Left ventricle myocardium superior (tissue), 1 donor: ENCODE measurements at regions of chr7 and their contacts with region 1.

Region 1: DNA sequence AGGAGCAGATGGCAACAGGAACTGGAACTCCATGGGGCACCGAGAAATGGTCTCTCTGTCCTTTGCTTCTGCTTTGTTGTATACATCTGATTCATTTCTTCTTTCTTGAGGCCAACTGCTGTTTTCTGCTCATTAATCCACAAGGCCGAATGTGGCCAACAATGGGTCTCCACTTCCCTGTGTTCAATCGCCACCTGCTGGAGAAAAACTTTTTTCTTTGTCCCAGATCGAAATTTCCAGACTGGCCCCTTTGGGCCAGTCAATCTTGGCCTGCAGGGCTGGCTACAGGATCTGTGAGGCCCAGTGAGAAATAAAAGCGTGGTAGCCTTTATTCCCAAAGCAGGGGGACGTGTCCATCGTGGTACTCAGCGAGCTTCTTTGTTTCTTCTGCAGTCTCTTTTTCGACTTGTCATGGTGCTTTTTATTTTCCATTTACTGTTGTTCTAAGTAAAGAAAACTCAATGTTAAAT is 58.8 kb downstream of the PARP12 start:
- DNase-seq: no peak
- ATAC-seq: no peak

Region 2: DNA sequence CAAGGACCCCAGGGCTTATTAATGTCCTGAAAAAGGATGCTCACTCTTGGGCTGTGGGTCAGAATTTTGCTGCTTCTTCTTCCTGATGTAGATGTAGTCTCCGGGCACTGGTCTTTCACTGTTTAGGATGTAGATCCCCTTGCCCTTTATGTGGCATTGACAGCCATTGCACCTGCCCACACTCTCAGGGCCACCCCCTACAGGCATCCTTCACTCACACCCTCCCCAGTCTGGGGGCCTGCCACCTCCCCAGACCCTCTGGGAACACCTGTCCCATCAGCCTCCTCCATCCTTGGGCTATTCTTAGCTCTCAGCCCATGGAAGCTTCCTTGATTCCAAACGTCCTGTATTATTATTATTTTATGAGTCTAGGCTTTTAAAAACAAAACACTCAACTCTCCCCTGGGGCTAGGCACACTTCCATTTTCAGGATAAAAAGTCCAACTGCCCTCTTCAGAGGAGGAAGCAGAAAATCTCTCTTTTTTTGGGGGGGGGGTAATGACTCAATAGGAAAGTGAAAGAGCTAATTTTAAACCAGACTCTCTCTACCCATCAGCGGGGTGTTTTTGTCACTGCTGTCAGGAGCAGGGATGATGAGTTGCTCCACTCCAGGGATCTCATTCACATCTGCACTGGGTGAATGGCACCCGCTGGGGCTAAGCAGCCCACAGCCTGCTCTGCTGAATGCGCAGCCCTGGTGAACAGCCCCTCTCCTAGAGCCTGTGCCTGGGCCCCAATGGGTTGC is 508.9 kb before region 1 on chr7:
- intact Hi-C with region 1: loop called (anchors 10 kb)
- DNase-seq: no peak
- ATAC-seq: peak; percentile 20

Region 3: GRCh38 chr7:139618482-139619366 is 385.2 kb before region 1 on chr7:
- intact Hi-C with region 1: loop called (anchors 10 kb)
- DNase-seq: peak; percentile 59
- ATAC-seq: peak; percentile 65

Region 4: GRCh38 chr7:139645572-139646523 is 358.1 kb before region 1 on chr7:
- intact Hi-C with region 1: loop called (anchors 10 kb)
- DNase-seq: peak; percentile 78
- ATAC-seq: peak; percentile 61